ENCODE measurements at regions of chr7 and their contacts with region 1.

Region 1: DNA sequence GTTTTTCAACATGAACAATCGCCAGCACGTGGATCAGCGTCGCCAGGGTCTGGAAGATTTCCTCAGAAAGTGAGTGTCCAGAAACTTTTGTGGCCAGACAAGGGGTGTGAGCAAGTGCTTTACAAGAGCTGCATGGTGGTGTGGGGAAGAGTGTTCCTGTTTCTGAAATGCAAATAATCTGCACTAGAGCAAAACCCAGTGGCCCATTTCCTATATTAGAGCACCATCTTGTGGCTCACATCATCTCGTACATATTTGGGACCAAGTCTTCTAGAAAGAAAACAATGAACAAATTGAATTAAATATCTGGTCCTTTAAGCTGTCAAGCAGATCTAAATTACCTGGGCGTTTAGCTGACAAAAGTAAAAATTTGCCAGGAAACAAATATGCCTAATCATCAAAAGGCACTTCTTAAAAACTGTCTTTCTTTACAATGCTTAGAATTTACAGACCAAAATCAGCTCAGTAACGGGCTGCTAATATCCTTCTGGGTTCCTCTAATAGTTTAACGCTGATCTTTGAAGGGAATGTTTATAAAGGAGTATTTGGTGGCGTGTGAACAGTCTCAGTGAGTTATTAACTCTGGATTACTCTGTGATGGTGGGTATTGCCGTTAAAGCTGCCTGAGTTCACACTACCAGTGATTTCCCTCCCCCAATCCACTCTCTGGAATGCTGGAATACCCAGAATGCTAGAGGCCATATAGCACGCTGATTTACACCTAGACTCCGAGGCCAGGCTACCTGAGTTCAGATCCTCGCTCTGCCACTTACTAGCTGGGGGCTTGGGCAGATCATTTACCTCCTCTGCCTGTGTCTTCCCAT is 73.6 kb downstream of the SNX10 start:
- DNase-seq: peak; percentile 83
- ATAC-seq: peak; percentile 96
- H3K4me3 ChIP-seq: no peak overlapping the region
- H3K27ac ChIP-seq: peak overlapping the region; percentile 48; the same call in 1 of the 2 replicates
- H3K4me1 ChIP-seq: peaks cover 11% of the 10 kb centered on the region
- H3K27me3 ChIP-seq: no peaks in the 10 kb centered on the region
- CTCF ChIP-seq: peak; percentile 62 to 94 (median 64); a peak in 5 of 6 replicates
- EP300 ChIP-seq: no peak
- POLR2A ChIP-seq: no peak
- RAD21 ChIP-seq: peak; percentile 98

Region 2: DNA sequence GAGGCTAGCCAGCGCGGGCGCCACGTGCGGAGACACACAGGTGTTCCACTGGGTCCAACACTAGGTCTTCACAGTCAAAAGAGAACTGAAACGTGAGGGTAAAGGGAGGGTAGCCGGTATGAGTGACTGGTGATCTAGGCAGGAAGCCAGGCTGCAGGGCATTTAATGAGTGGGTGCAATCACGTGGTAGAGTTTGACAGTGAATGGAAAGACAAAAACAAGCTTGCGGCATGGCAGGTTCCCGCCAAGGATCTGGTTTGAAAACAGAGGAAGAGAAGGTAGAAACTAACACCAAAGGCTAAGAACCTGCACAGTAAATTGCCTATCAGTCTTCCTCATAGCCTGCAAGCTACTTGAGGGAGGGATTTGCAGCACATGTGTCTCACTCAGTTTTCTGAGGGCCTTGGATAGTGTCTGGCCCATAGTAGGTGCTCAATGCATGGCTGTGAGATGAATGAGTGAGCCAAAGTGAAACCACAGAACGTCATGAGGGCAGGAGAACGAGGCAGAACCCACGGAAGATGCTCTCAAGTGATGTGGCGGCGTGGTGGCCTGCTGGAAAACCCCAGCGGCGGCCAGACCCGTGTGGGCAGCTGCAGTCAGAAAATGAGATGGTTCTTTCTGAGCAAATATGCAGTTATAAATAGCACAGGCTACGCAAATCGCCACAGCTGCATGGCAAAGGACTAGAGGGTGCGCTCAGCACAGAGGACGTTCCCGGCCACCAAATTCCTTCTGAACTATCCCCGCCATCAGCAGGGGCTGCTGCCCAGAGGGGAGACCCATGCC is 396.9 kb before region 1 on chr7:
- CTCF ChIA-PET with region 1: interaction called, 5 read pairs
- POLR2A ChIA-PET with region 1: no interaction called
- RAD21 ChIA-PET with region 1: interaction called, 3 read pairs
- SMC1A ChIA-PET with region 1: interaction called, 3 read pairs
- in situ Hi-C with region 1: no loop called
- intact Hi-C with region 1: loop called (anchors 5 kb)
- DNase-seq: peak; percentile 98
- ATAC-seq: peak; percentile 75
- H3K4me3 ChIP-seq: peak overlapping the region; percentile 31; the same call in 1 of the 2 replicates
- H3K27ac ChIP-seq: peak overlapping the region; percentile 91
- H3K4me1 ChIP-seq: peaks cover 54% of the 10 kb centered on the region
- H3K27me3 ChIP-seq: no peaks in the 10 kb centered on the region
- CTCF ChIP-seq: peak; percentile 5 to 23 (median 10); a peak in 1 of 6 replicates
- EP300 ChIP-seq: peak; percentile 94 to 95
- POLR2A ChIP-seq: peak; percentile 54; the same call in 1 of the 2 replicates
- RAD21 ChIP-seq: 0 out of 2 replicates have a peak, but pooled peaks have one; percentile 19

Region 3: GRCh38 chr7:26193432-26194207 is 171.7 kb before region 1 on chr7:
- CTCF ChIA-PET with region 1: interaction called, 24 read pairs
- POLR2A ChIA-PET with region 1: interaction called, 3 read pairs
- RAD21 ChIA-PET with region 1: interaction called, 15 read pairs
- SMC1A ChIA-PET with region 1: interaction called, 28 read pairs
- in situ Hi-C with region 1: loop called (anchors 10 kb)
- intact Hi-C with region 1: no loop called
- DNase-seq: no peak
- ATAC-seq: peak; percentile 56
- H3K4me3 ChIP-seq: peak overlapping the region; percentile 49; the same call in 1 of the 2 replicates
- H3K27ac ChIP-seq: no peak overlapping the region
- H3K4me1 ChIP-seq: peaks cover 27% of the 10 kb centered on the region
- H3K27me3 ChIP-seq: no peaks in the 10 kb centered on the region
- CTCF ChIP-seq: no peak
- EP300 ChIP-seq: no peak
- POLR2A ChIP-seq: no peak
- RAD21 ChIP-seq: no peak

Region 4: GRCh38 chr7:26291699-26292538 is 73.4 kb before region 1 on chr7 and contains the start of gene SNX10:
- CTCF ChIA-PET with region 1: interaction called, 53 read pairs
- POLR2A ChIA-PET with region 1: interaction called, 4 read pairs
- RAD21 ChIA-PET with region 1: interaction called, 29 read pairs
- SMC1A ChIA-PET with region 1: interaction called, 55 read pairs
- in situ Hi-C with region 1: no loop called
- intact Hi-C with region 1: loop called (anchors 1 kb)
- DNase-seq: no peak
- ATAC-seq: peak; percentile 80
- H3K4me3 ChIP-seq: peak within 1 kb of the TSS; percentile 98
- H3K27ac ChIP-seq: peak within 1 kb of the TSS; percentile 87
- H3K4me1 ChIP-seq: peaks cover 16% of the 10 kb centered on the region
- H3K27me3 ChIP-seq: no peaks in the 10 kb centered on the region
- CTCF ChIP-seq: peak; percentile 54 to 84 (median 54); a peak in 5 of 6 replicates
- EP300 ChIP-seq: no peak
- POLR2A ChIP-seq: peak; percentile 66; the same call in 1 of the 2 replicates
- RAD21 ChIP-seq: peak; percentile 67
- polyA plus RNA-seq, gene SNX10: 22.9 to 29.7 TPM

Region 5: GRCh38 chr7:26381476-26382353 is 16.4 kb after region 1 on chr7:
- CTCF ChIA-PET with region 1: interaction called, 14 read pairs
- POLR2A ChIA-PET with region 1: no interaction called
- RAD21 ChIA-PET with region 1: interaction called, 5 read pairs
- SMC1A ChIA-PET with region 1: interaction called, 9 read pairs
- in situ Hi-C with region 1: no loop called
- intact Hi-C with region 1: no loop called
- DNase-seq: no peak
- ATAC-seq: no peak
- H3K4me3 ChIP-seq: no peak overlapping the region
- H3K27ac ChIP-seq: no peak overlapping the region
- H3K4me1 ChIP-seq: peaks cover 3% of the 10 kb centered on the region; the same call in 1 of the 2 replicates
- H3K27me3 ChIP-seq: no peaks in the 10 kb centered on the region; a peak in 1 of 4 replicates
- CTCF ChIP-seq: no peak
- EP300 ChIP-seq: no peak
- POLR2A ChIP-seq: no peak
- RAD21 ChIP-seq: no peak

Region 6: GRCh38 chr7:26658397-26659084 is 293.3 kb after region 1 on chr7:
- CTCF ChIA-PET with region 1: interaction called, 66 read pairs
- POLR2A ChIA-PET with region 1: no interaction called
- RAD21 ChIA-PET with region 1: interaction called, 6 read pairs
- SMC1A ChIA-PET with region 1: interaction called, 11 read pairs
- in situ Hi-C with region 1: no loop called
- intact Hi-C with region 1: no loop called
- DNase-seq: no peak
- ATAC-seq: no peak
- H3K4me3 ChIP-seq: no peak overlapping the region
- H3K27ac ChIP-seq: no peak overlapping the region
- H3K4me1 ChIP-seq: no peaks in the 10 kb centered on the region
- H3K27me3 ChIP-seq: no peaks in the 10 kb centered on the region
- CTCF ChIP-seq: no peak
- EP300 ChIP-seq: no peak
- POLR2A ChIP-seq: no peak
- RAD21 ChIP-seq: no peak

Region 7: GRCh38 chr7:27269455-27269854 is 904.2 kb after region 1 on chr7:
- CTCF ChIA-PET with region 1: no interaction called
- POLR2A ChIA-PET with region 1: no interaction called
- RAD21 ChIA-PET with region 1: no interaction called
- SMC1A ChIA-PET with region 1: no interaction called
- in situ Hi-C with region 1: no loop called
- intact Hi-C with region 1: no loop called
- DNase-seq: no peak
- ATAC-seq: no peak
- H3K4me3 ChIP-seq: no peak overlapping the region
- H3K27ac ChIP-seq: no peak overlapping the region
- H3K4me1 ChIP-seq: no peaks in the 10 kb centered on the region
- H3K27me3 ChIP-seq: no peaks in the 10 kb centered on the region
- CTCF ChIP-seq: no peak
- EP300 ChIP-seq: no peak
- POLR2A ChIP-seq: no peak
- RAD21 ChIP-seq: no peak

Measured in GM12878 (cell line).